PC-9 (cell line): ENCODE measurements at regions of chr20 and their contacts with region 1.

Region 1: GRCh38 chr20:35447082-35447789 is 8.2 kb upstream of the CEP250 start:
- DNase-seq: peak; percentile 59 to 91
- H3K4me3 ChIP-seq: no peak overlapping the region
- H3K27ac ChIP-seq: no peak overlapping the region
- H3K4me1 ChIP-seq: no peaks in the 10 kb centered on the region
- H3K27me3 ChIP-seq: no peaks in the 10 kb centered on the region
- CTCF ChIP-seq: peak; percentile 96

Region 2: GRCh38 chr20:34377072-34377847 is 1070.0 kb before region 1 on chr20:
- CTCF ChIA-PET with region 1: interaction called, 10 read pairs
- POLR2A ChIA-PET with region 1: no interaction called
- intact Hi-C with region 1: no loop called
- DNase-seq: no peak
- H3K4me3 ChIP-seq: no peak overlapping the region
- H3K27ac ChIP-seq: peak overlapping the region; percentile 39; the same call in 1 of the 2 replicates
- H3K4me1 ChIP-seq: peaks cover 20% of the 10 kb centered on the region; the same call in 1 of the 2 replicates
- H3K27me3 ChIP-seq: no peaks in the 10 kb centered on the region
- CTCF ChIP-seq: no peak

Region 3: DNA sequence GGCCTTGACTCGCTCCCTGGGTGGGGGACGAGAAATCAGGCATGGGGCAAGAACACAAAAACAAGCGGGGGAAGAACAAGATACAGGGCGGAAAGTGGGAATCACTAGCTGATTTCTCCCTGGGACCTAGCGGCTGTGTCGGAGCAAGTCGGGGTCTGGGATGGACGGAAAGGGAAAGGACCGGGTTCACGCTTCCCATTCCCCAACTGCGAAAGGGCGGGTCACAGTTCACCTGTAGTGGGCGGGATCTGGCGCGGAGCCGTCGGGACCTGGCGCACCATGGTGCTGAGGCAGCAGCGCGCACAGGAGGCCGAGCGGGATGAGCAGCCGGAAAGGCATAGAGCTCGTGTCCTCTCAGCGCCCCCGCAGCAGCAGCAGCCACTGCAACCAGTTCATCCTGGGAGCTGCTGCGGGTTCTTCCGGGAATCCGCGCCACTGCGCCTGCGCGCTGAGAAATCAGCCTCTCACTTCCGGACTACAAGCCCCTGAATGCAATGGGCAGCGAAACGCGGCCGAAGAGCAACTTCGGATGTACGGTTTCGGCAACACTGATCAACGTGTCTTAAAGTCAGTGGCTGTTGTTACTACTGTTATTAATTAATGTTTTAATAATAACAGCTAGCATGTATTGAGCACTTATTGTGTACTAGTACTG is 300.2 kb before region 1 on chr20 and contains the start of gene EDEM2:
- CTCF ChIA-PET with region 1: interaction called, 4 read pairs
- POLR2A ChIA-PET with region 1: no interaction called
- intact Hi-C with region 1: loop called (anchors 2 kb)
- DNase-seq: peak; percentile 89 to 96
- H3K4me3 ChIP-seq: peak within 1 kb of the TSS; percentile 93
- H3K27ac ChIP-seq: peak within 1 kb of the TSS; percentile 94
- H3K4me1 ChIP-seq: peaks cover 14% of the 10 kb centered on the region
- H3K27me3 ChIP-seq: no peaks in the 10 kb centered on the region
- CTCF ChIP-seq: no peak
- total RNA-seq, gene EDEM2: 28.6 and 34.9 TPM in 2 replicates

Region 4: GRCh38 chr20:35368666-35369423 is 78.4 kb before region 1 on chr20:
- CTCF ChIA-PET with region 1: no interaction called
- POLR2A ChIA-PET with region 1: no interaction called
- intact Hi-C with region 1: no loop called
- DNase-seq: no peak
- H3K4me3 ChIP-seq: no peak overlapping the region
- H3K27ac ChIP-seq: no peak overlapping the region
- H3K4me1 ChIP-seq: no peaks in the 10 kb centered on the region
- H3K27me3 ChIP-seq: no peaks in the 10 kb centered on the region
- CTCF ChIP-seq: no peak

Region 5: GRCh38 chr20:35511814-35512420 is 64.7 kb after region 1 on chr20:
- CTCF ChIA-PET with region 1: no interaction called
- POLR2A ChIA-PET with region 1: no interaction called
- intact Hi-C with region 1: no loop called
- DNase-seq: peak in 1 of 2 experiments; percentile 56
- H3K4me3 ChIP-seq: no peak overlapping the region
- H3K27ac ChIP-seq: no peak overlapping the region
- H3K4me1 ChIP-seq: peaks cover 28% of the 10 kb centered on the region
- H3K27me3 ChIP-seq: no peaks in the 10 kb centered on the region
- CTCF ChIP-seq: peak; percentile 86